Activated B cell treated with CpG ODN at 0.5 μM for 24 hours (primary cell): ENCODE measurements at regions of chr19 and their contacts with region 1.

Region 1: DNA sequence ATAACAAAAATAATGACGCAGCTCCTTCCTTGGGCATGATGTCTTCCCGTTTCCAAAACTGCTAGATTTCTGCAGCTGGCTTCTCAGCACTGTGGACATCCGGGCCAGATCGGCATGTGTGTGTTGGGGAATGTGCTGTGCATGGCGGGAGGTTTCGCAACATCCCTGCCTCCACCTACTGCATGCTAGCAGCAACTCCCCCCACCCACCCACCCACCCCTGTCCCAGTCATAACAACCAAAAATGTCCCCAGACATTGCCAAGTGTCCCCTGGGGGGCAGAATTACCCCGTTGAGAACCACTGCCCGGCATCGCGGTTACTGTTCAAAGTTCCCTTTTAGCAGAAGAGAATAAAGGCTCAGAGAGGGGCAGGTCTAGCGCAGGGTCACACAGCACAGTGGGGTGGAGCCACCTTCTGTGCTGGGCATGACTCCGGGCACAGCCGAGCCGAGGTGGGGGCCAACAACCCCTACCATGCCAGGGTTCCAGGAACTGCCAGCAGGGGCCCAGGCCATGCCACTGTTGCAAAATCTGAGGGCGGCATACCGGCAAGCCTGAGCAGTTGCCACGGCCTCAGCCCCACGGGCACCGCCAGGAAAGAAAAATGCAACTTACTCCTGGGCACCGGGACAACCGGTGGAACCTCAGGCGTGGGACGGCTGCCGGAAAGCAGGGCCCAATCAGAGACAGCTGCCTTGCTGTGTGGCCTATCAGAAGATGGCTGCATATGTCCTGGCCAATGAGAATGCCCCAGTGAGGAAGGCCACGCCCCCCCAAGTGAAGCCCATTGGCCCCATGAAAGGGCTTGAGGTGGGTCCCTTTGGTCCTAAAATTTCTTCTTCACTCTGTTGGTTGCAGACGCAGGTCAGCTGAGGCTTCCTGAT is 22.5 kb upstream of the NFIC start:
- DNase-seq: no peak
- ATAC-seq: peak; percentile 87
- H3K4me3 Mint-ChIP-seq: no peak overlapping the region
- H3K27ac Mint-ChIP-seq: no peak overlapping the region
- H3K4me1 Mint-ChIP-seq: peaks cover 3% of the 10 kb centered on the region
- H3K27me3 Mint-ChIP-seq: peaks cover 8% of the 10 kb centered on the region
- CTCF ChIP-seq: no peak

Region 2: GRCh38 chr19:3429581-3430080 is 85.8 kb after region 1 on chr19:
- CTCF ChIA-PET with region 1: interaction called, 16 read pairs
- POLR2A ChIA-PET with region 1: interaction called, 3 read pairs
- intact Hi-C with region 1: no loop called
- DNase-seq: peak; percentile 81
- ATAC-seq: peak; percentile 87
- H3K4me3 Mint-ChIP-seq: no peak overlapping the region
- H3K27ac Mint-ChIP-seq: no peak overlapping the region
- H3K4me1 Mint-ChIP-seq: peaks cover 20% of the 10 kb centered on the region
- H3K27me3 Mint-ChIP-seq: no peaks in the 10 kb centered on the region
- CTCF ChIP-seq: peak; percentile 63